Head of caudate nucleus (tissue), 42 donors: ENCODE measurements at regions of chr11 and their contacts with region 1.

Region 1: DNA sequence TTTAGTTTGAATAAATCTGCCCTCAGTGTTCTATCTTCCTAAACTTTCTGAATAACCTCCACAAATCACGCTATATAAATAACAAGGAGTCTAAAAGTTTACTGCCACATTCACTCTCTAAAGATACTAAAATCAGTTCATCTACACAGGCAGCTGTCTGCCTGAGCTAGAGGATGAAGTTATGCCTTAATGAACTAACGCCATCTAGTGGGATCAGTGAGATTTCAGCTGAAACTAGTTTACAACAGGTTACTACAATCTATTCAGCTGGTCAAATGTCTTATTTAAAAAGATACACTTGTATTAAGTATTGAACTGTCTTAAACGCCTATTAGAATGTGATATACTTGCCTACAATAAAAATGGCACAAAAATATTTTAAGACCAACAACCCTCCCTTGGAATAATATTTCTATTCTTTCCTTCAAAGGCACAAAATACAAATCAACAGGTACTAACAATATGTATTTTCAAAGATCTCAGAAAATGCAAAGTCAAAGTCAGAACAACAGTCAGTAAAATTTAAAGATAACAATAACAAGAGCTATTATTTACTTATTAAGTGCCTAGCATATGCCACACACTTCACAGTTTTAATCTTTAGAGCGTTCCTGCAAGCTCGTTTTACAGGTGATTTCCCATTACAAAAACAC is 84.1 kb downstream of the LARGE2 start:
- DNase-seq: peak in 15 of 42 donors; percentile 22 to 78 (median 60)

Region 2: DNA sequence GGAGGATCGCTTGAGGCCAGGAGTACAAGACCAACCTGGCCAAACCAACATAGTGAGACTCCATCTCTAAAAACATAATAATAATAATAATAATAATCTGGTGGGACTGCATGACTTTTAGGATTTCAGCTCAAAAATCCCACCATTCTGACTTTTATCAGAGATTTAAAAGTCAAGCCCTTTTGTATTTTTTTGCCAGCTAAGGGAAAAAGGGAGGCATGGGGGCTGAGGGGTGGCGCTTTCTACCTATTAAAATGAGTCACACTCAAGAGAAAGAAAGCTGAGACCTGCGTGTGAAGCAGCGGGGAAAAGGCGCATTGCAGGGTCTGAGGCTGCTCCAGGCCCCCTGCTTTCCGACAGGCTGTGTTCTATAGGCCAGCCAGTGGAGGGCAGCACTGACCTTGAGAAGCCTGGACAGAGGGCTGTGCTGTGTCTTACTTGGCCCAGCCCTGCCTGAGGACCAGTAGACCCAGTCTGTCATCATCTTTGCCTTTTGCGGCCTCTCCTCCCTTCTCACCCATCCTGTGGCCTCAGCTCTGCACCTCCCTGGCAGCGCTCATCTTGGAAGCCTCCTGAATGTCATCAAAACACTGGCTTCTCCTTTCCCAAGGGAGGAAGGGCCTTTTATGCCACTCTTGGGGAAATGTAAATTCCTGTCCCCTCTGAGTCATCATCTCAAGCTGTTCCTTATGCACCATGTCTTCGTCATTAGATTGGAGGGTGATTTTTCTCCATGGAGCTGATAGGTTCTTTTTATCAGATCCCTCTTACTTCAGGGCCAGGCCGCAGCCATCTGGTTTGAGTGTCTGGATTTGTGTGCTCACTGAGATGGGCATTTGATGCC is 133.8 kb before region 1 on chr11:
- intact Hi-C with region 1: loop called (anchors 10 kb)
- DNase-seq: peak; percentile 58 to 89 (median 77)

Region 3: GRCh38 chr11:45964911-45965389 is 41.6 kb before region 1 on chr11:
- intact Hi-C with region 1: loop called (anchors 5 kb)
- DNase-seq: peak; percentile 37 to 87 (median 70)